Panc1 (cell line): ENCODE measurements at regions of chr3 and their contacts with region 1.

Region 1: DNA sequence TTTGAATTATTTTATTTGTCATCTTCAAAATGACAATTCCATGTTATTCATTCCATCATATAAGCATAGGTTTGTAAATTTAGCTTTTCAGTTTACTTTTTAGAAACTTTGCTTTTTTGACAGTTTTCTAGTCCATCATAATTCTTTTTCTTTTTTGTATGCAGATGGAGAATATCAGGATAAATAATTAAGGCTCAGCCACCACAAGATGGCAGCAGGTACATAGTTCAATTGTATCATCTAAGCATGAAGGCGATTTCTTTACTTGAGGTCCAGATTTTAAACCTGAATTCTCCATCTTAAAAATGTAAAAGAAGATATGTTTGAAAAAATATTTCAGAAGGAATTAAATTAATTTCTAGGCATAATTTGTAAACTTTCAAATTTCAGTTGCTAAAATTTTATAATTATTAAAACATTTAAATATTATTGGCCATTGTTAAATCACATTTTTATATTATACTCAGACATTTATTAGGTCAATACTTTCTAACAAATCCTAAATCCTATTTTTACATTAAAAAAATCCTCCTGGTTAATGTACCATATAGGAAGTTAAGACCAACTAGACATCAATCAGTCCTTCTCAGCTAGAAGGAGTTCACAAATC is 15.1 kb downstream of the PLSCR5 start:
- DNase-seq: peak; percentile 20
- ATAC-seq: peak; percentile 70; the same call in 1 of the 2 replicates
- H3K4me3 ChIP-seq: no peak overlapping the region
- H3K27ac ChIP-seq: no peak overlapping the region
- H3K4me1 ChIP-seq: no peaks in the 10 kb centered on the region
- H3K27me3 ChIP-seq: no peaks in the 10 kb centered on the region; the same call in 1 of the 2 replicates
- CTCF ChIP-seq: peak; percentile 77; the same call in 1 of the 2 replicates

Region 2: GRCh38 chr3:146640955-146641867 is 51.2 kb after region 1 on chr3:
- CTCF ChIA-PET with region 1: interaction called, 3 read pairs
- POLR2A ChIA-PET with region 1: no interaction called
- in situ Hi-C with region 1: no loop called
- intact Hi-C with region 1: loop called (anchors 1 kb)
- DNase-seq: no peak
- ATAC-seq: peak; percentile 91
- H3K4me3 ChIP-seq: no peak overlapping the region
- H3K27ac ChIP-seq: no peak overlapping the region
- H3K4me1 ChIP-seq: no peaks in the 10 kb centered on the region
- H3K27me3 ChIP-seq: no peaks in the 10 kb centered on the region; the same call in 1 of the 2 replicates
- CTCF ChIP-seq: peak; percentile 81; the same call in 1 of the 2 replicates